ENCODE measurements at regions of chr7 and their contacts with region 1.

Region 1: DNA sequence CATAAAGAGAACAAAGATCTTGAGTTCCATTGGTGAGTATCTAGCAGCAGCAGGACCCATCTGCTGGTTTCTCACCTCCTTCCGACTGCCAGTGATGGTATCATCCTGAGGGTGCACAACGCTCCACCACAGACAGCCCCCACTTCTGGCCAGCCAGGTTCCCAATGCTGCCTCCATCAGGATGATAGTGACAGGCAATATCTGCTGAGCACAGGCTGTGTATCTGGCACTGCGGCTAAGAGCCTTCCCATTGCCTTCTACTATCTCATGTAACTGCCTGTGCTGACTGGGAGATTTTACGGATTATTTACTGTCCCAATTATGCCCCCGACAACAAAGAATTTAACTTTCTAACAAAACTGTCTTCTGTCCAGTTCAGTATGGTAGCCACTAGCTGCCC is 352.4 kb upstream of the AOAH start:
- DNase-seq: no peak
- H3K4me3 ChIP-seq: no peak overlapping the region
- H3K27ac ChIP-seq: no peak overlapping the region
- H3K4me1 ChIP-seq: no peaks in the 10 kb centered on the region
- H3K27me3 ChIP-seq: no peaks in the 10 kb centered on the region
- CTCF ChIP-seq: no peak

Region 2: DNA sequence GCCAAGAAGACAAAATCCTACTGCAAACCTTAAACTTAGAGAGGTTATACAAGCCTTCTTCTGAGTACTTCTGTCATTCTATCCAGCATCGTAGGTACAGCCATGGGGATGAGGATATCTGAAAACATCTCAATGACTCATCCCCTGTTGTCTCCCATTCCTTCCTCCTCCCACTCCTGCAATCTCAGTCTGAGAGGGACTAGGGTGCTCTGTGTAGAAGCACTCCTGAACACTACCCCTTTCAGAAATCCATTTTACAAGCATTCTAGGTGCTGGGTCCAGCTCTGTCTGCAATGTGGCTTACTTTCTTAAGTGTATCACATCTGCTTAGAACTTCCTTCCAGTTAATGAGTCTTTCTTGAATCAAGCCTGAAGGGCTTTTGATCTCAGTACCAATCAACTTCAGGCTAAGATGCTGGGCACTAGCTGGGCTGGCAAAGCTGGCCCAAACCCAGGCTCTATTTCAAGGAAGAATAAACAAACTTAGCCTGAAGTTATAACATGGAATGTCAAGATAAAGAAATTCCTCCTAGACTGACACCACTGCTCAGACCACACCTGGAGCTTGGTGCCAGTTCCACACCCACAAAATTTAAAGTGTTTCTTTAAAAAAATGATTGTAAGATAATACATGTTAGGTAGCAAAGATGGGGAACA is 82.1 kb before region 1 on chr7:
- CTCF ChIA-PET with region 1: no interaction called
- dilution Hi-C with region 1: loop called (anchors 5 kb)
- in situ Hi-C with region 1: no loop called
- intact Hi-C with region 1: no loop called
- DNase-seq: peak; percentile 51
- H3K4me3 ChIP-seq: no peak overlapping the region
- H3K27ac ChIP-seq: no peak overlapping the region
- H3K4me1 ChIP-seq: no peaks in the 10 kb centered on the region
- H3K27me3 ChIP-seq: no peaks in the 10 kb centered on the region
- CTCF ChIP-seq: no peak

Region 3: DNA sequence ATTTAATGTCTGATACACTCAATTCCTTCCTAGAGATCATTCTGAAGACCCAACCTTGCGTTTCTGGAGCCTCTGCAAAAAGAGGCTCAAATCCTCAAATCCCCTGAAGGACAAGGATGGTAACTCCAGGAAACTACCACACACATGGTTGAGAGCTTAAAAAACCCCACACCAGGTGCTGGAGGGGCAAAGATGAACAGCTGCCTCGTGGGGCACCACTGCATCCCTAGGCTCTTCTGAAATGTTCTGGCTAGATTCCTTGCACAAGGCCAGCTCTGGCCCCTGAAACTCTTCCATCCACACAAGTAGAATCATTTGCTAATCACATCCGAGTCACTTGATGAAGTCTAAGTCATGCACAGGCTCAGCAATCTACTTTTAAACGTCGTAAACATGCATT is 85.4 kb after region 1 on chr7:
- CTCF ChIA-PET with region 1: no interaction called
- dilution Hi-C with region 1: no loop called
- in situ Hi-C with region 1: no loop called
- intact Hi-C with region 1: no loop called
- DNase-seq: no peak
- H3K4me3 ChIP-seq: no peak overlapping the region
- H3K27ac ChIP-seq: no peak overlapping the region
- H3K4me1 ChIP-seq: no peaks in the 10 kb centered on the region
- H3K27me3 ChIP-seq: no peaks in the 10 kb centered on the region
- CTCF ChIP-seq: no peak